GM13976 (cell line): ENCODE measurements at regions of chr1 and their contacts with region 1.

Region 1: GRCh38 chr1:52393174-52393573 is 11.0 kb downstream of the ORC1 start:
- DNase-seq: no peak
- CTCF ChIP-seq: no peak

Region 2: GRCh38 chr1:52102336-52103013 is 290.7 kb before region 1 on chr1:
- in situ Hi-C with region 1: no loop called
- DNase-seq: no peak
- CTCF ChIP-seq: no peak

Region 3: GRCh38 chr1:52683367-52683940 is 290.3 kb after region 1 on chr1:
- in situ Hi-C with region 1: loop called (anchors 10 kb)
- DNase-seq: no peak
- CTCF ChIP-seq: no peak